ENCODE measurements at regions of chr6 and their contacts with region 1.

Region 1: GRCh38 chr6:19851241-19852089 is 14.3 kb downstream of the ID4 start:
- DNase-seq: peak; percentile 84
- H3K4me3 ChIP-seq: no peak overlapping the region
- H3K27ac ChIP-seq: no peak overlapping the region
- H3K4me1 ChIP-seq: no peaks in the 10 kb centered on the region
- H3K27me3 ChIP-seq: no peaks in the 10 kb centered on the region

Region 2: GRCh38 chr6:18595774-18596530 is 1255.5 kb before region 1 on chr6:
- in situ Hi-C with region 1: loop called (anchors 25 kb)
- DNase-seq: peak; percentile 74
- H3K4me3 ChIP-seq: peak overlapping the region; percentile 33; the same call in 1 of the 2 replicates
- H3K27ac ChIP-seq: no peak overlapping the region
- H3K4me1 ChIP-seq: 0 out of 2 replicates have a peak, but pooled peaks cover 8% of the 10 kb centered on the region
- H3K27me3 ChIP-seq: no peaks in the 10 kb centered on the region

Region 3: GRCh38 chr6:18742406-18742805 is 1109.1 kb before region 1 on chr6:
- in situ Hi-C with region 1: loop called (anchors 25 kb)
- DNase-seq: peak; percentile 78
- H3K4me3 ChIP-seq: no peak overlapping the region
- H3K27ac ChIP-seq: peak overlapping the region; percentile 53
- H3K4me1 ChIP-seq: peaks cover 7% of the 10 kb centered on the region; the same call in 1 of the 2 replicates
- H3K27me3 ChIP-seq: no peaks in the 10 kb centered on the region

Region 4: GRCh38 chr6:19024737-19025136 is 826.7 kb before region 1 on chr6:
- in situ Hi-C with region 1: loop called (anchors 25 kb)
- DNase-seq: peak; percentile 52
- H3K4me3 ChIP-seq: no peak overlapping the region
- H3K27ac ChIP-seq: no peak overlapping the region
- H3K4me1 ChIP-seq: no peaks in the 10 kb centered on the region
- H3K27me3 ChIP-seq: no peaks in the 10 kb centered on the region; the same call in 1 of the 2 replicates

Region 5: DNA sequence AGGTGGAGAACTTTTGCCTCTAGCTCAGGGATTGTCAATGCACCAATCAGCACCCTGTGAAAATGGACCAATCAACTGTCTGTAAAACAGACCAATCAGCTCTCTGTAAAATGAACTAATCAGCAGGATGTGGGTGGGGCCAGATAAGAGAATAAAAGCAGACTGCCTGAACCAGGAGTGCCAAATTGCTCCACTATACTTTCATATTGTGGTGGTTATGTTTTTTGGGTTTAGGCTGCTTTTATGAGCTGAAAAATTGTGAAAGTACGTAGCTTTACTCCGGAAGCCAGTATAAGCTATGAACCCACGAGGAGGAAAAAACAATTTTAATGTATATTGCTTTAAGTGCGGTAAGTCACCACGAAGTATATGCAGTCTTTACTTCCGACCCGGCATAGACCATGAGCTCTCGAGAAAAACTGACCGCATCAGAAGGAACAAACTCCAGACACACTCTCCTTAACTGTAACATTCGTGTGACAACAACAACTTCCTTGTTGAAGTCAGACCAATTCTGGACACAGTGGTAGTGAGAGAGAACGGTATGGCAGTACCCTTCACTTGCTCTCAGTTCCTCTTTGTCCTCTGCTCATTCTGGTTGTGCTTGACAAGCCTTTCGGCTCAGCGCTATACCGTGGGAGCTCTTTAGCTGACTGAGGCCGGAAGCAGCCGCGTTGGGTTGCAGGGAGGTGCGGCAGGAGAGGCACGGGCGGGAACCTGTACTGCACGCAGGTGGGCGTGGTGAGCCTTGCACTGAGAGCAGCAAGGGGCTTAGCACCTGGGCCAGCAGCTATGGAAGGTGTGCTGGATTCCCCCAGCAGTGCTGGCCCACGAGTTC is 468.3 kb after region 1 on chr6:
- in situ Hi-C with region 1: no loop called
- DNase-seq: no peak
- H3K4me3 ChIP-seq: no peak overlapping the region
- H3K27ac ChIP-seq: no peak overlapping the region
- H3K4me1 ChIP-seq: no peaks in the 10 kb centered on the region
- H3K27me3 ChIP-seq: no peaks in the 10 kb centered on the region